Calu3 (cell line): ENCODE measurements at regions of chr3 and their contacts with region 1.

Region 1: DNA sequence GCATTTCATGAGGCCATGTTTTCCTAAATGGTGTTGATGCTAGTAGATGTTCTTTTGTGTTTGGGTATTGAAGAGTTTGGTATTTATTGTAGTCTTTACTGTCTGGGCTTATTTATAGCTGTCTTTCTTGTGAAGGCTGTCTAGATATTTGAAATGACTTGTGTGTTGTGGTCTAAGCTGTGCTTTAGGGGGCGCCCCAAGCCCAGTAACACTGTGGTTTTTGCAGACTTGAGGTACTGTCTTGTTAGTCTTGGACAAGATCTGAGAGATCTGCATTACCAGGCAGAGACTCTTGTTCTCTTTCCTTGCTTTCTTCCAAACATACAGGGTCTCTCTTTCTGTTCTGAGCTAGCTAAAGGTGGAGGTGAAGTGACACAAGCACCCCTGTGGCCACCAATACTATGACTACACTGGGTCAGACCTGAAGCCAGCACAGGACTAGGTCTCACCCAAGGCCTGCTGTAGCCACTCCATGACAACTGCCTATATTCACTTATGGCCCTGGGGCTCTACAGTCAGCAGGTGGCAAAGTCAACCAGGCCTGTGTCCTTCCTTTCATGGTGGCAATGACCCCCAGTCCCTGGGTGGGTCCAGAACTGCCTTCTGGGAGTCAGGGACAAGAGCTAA is 152.1 kb upstream of the TBC1D5 start:
- DNase-seq: peak; percentile 70
- H3K4me3 Mint-ChIP-seq: no peak overlapping the region
- H3K27ac Mint-ChIP-seq: no peak overlapping the region
- H3K4me1 Mint-ChIP-seq: peaks cover 12% of the 10 kb centered on the region
- H3K27me3 Mint-ChIP-seq: no peaks in the 10 kb centered on the region
- CTCF ChIP-seq: peak; percentile 56

Region 2: DNA sequence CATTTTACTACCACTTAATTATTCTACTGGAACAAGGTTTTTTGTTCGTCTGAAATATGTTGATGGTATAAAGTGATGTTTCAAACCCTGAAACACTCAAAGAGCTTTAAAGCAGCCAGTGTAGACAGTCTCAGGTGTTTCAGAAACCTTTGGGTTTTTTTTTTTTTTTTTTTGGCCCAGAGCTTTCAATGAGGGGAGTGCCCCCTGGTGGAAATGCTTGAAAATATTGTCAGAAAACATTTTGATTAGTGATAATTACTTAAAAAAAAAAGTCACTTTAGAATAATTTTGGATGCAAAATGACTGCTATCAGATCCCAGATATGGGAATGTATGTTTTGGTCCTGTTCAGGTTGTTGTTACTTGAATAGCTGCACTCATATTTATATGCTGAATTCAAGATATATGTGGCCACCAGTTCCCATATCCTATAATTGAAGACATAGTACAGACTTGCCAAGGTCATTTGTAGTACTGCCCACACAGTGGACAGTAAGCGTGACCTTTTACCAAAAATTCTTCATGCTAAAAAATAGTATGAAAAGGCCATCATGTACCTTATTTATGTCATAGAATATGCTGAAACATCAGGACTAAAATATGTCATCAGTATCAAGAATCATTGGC is 494.7 kb after region 1 on chr3:
- CTCF ChIA-PET with region 1: interaction called, 12 read pairs
- intact Hi-C with region 1: loop called (anchors 1 kb)
- DNase-seq: peak; percentile 38
- H3K4me3 Mint-ChIP-seq: no peak overlapping the region
- H3K27ac Mint-ChIP-seq: no peak overlapping the region
- H3K4me1 Mint-ChIP-seq: no peaks in the 10 kb centered on the region
- H3K27me3 Mint-ChIP-seq: no peaks in the 10 kb centered on the region
- CTCF ChIP-seq: peak; percentile 31